Testis (tissue), 5 donors: ENCODE measurements at regions of chr5 and their contacts with region 1.

Region 1: DNA sequence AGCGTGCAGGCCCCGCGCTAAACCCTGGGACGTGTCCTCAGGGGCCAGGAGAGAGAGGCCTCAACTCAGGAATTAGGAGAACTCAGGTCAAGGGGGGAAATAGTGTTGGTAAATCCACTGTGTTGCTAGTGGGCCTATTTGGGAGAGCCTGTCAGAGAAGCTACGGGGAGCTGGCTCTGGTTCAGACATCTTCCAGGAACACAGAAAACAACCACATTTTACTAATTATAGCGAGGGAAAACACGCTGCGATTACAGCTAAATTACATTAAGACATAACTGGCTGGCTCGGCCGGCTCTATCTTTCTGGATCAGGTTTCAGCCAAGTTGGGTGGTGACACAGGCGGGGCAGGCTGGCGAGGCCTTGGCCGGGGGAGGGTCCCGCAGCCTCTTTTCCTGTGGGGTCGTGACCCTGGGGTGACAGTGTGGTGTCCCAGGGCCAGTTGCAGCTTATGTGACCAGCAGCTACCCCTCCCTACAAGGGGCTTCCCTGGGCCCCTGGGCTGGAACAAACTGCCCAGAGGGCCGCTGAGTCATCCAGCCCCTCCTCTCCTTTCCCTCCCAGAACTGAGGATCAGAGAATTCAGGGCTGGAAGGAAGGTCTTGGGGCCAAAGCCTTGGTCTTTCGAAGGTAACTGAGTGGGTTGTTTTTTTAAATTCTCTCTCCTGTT is 75.1 kb downstream of the FGF18 start:
- DNase-seq: peak; percentile 80
- H3K4me3 ChIP-seq: no peak overlapping the region
- H3K27ac ChIP-seq: peak overlapping the region in 1 of 2 donors; percentile 54
- H3K4me1 ChIP-seq: peaks cover 17% of the 10 kb centered on the region
- H3K27me3 ChIP-seq: no peaks in the 10 kb centered on the region
- CTCF ChIP-seq: no peak
- POLR2A ChIP-seq: no peak

Region 2: GRCh38 chr5:171571663-171572062 is 77.1 kb after region 1 on chr5:
- intact Hi-C with region 1: loop called (anchors 10 kb)
- DNase-seq: no peak
- H3K4me3 ChIP-seq: no peak overlapping the region
- H3K27ac ChIP-seq: no peak overlapping the region
- H3K4me1 ChIP-seq: no peaks in the 10 kb centered on the region
- H3K27me3 ChIP-seq: no peaks in the 10 kb centered on the region
- CTCF ChIP-seq: no peak
- POLR2A ChIP-seq: no peak